WTC11 (cell line): ENCODE measurements at regions of chr1 and their contacts with region 1.

Region 1: DNA sequence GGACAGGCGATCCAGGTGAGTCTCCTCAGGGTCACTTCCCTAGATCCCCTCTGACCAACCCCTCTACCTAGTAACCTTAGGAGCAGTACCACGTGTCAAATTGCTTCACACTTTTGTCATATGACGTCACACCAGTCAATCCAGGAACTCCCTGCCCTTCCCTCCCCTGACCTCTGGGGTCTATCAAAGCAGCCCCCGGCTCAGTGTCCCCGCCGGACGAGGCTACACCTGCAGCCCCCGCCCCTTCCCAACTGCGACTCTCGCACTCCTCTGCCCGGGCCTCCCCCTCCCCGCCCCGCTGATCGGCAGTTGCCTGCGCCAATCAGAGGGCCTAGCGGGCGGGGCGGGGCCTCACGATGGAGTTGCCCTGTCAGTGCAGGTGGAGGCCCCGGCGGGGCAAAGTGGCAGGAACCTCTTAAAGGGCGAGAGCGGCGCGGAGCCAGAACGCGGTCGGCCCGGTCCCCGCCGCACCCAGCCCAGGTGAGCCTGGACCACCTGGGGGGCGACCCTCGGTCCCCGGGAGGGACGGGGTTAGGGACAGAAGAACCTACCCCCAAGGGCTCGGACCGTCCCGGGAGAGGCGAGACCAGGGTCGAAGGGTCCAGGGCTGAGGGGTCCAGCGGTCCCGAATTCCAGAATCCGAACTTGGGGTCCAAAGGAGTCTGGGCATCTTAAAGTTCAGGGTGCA is 27.5 kb upstream of the EPB41 start:
- DNase-seq: peak; percentile 93
- ATAC-seq: peak; percentile 64
- H3K4me3 Mint-ChIP-seq: peak overlapping the region; percentile 68
- H3K27ac Mint-ChIP-seq: 0 out of 2 replicates have a peak overlapping the region, but pooled peaks have one; percentile 14
- H3K4me1 Mint-ChIP-seq: peaks cover 46% of the 10 kb centered on the region
- H3K27me3 Mint-ChIP-seq: peaks cover 10% of the 10 kb centered on the region
- CTCF ChIP-seq: no peak

Region 2: GRCh38 chr1:28775121-28775944 is 111.5 kb before region 1 on chr1:
- CTCF ChIA-PET with region 1: interaction called, 18 read pairs
- POLR2A ChIA-PET with region 1: interaction called, 4 read pairs
- DNase-seq: peak; percentile 77
- ATAC-seq: peak; percentile 91
- H3K4me3 Mint-ChIP-seq: peak overlapping the region; percentile 69
- H3K27ac Mint-ChIP-seq: peak overlapping the region; percentile 88
- H3K4me1 Mint-ChIP-seq: 0 out of 2 replicates have a peak, but pooled peaks cover 3% of the 10 kb centered on the region
- H3K27me3 Mint-ChIP-seq: no peaks in the 10 kb centered on the region
- CTCF ChIP-seq: no peak

Region 3: GRCh38 chr1:28792644-28793121 is 94.2 kb before region 1 on chr1:
- CTCF ChIA-PET with region 1: interaction called, 13 read pairs
- POLR2A ChIA-PET with region 1: no interaction called
- DNase-seq: no peak
- ATAC-seq: no peak
- H3K4me3 Mint-ChIP-seq: no peak overlapping the region
- H3K27ac Mint-ChIP-seq: no peak overlapping the region
- H3K4me1 Mint-ChIP-seq: peaks cover 19% of the 10 kb centered on the region
- H3K27me3 Mint-ChIP-seq: no peaks in the 10 kb centered on the region; the same call in 1 of the 2 replicates
- CTCF ChIP-seq: no peak

Region 4: DNA sequence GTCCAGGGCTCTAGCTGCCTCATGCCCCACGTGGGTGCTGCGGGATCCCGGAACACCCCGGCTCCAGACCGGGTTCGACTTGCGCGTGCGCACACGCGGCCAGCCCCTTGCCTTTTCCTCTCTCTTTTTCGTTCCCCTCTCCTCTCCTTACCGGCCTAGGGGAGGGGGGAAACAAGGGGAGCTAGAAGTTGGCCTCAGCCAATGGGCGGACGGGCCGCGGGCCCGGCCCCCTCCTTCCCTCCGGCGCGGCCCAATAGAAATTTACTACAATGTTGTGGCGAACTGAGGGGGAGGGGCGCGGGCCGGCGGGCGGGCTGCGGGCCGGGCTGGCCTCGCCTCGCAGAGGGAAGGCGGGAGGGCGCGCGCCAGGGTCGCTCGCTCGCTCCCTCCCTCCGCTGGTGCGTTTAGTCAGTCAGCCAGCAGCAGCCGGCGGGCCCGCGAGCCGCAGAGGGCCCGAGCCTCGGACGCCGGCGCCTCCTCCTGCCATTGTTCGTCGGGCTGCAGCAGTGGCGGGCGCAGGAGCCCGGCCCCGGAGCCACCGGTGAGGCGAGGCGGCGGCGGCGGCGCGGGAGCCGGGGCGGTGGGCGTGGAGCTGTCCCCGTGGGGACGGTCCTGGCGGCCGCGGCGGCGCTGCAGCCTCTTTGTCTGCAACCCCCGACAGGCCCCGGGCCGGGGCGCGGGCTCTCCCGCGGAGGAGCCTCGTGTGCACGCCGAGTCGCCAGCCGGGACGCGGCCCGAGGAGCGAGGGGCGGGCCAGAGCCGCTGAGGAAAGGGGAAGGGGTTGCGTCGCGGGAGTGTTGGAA is 27.6 kb after region 1 on chr1 and contains the start of gene EPB41:
- CTCF ChIA-PET with region 1: interaction called, 23 read pairs
- POLR2A ChIA-PET with region 1: interaction called, 7 read pairs
- DNase-seq: peak; percentile 97
- ATAC-seq: peak; percentile 96
- H3K4me3 Mint-ChIP-seq: peak within 1 kb of the TSS; percentile 97
- H3K27ac Mint-ChIP-seq: peak within 1 kb of the TSS; percentile 97
- H3K4me1 Mint-ChIP-seq: peaks cover 26% of the 10 kb centered on the region
- H3K27me3 Mint-ChIP-seq: no peaks in the 10 kb centered on the region
- CTCF ChIP-seq: no peak
- total RNA-seq, gene EPB41: 80.6 to 85.0 TPM (median 81.2 TPM) in 3 replicates

Region 5: DNA sequence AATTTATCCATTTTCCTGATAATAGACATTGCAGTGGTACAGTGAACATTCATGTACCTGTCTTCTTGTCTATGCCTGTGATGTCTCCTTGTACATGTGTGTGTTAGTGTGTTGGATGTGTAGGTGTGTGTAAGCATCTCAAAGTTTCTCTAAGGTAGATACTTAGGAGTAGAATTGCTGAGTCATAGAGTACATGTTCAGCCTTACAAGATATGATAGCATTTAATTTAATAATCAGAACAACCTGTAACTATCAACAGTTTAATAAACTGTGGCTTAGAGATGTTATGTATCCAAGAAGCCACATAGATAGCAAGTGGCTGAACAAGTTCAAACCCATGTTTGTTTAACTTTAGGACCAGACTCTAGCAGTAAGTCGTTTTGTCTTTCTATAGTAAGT is 63.1 kb after region 1 on chr1:
- CTCF ChIA-PET with region 1: no interaction called
- POLR2A ChIA-PET with region 1: no interaction called
- DNase-seq: no peak
- ATAC-seq: no peak
- H3K4me3 Mint-ChIP-seq: no peak overlapping the region
- H3K27ac Mint-ChIP-seq: peak overlapping the region; percentile 38
- H3K4me1 Mint-ChIP-seq: peaks cover 15% of the 10 kb centered on the region
- H3K27me3 Mint-ChIP-seq: no peaks in the 10 kb centered on the region
- CTCF ChIP-seq: no peak

Region 6: GRCh38 chr1:29033829-29034466 is 147.1 kb after region 1 on chr1:
- CTCF ChIA-PET with region 1: interaction called, 102 read pairs
- POLR2A ChIA-PET with region 1: no interaction called
- DNase-seq: no peak
- ATAC-seq: no peak
- H3K4me3 Mint-ChIP-seq: no peak overlapping the region
- H3K27ac Mint-ChIP-seq: no peak overlapping the region
- H3K4me1 Mint-ChIP-seq: peaks cover 9% of the 10 kb centered on the region
- H3K27me3 Mint-ChIP-seq: no peaks in the 10 kb centered on the region
- CTCF ChIP-seq: no peak

Region 7: GRCh38 chr1:29124366-29125236 is 237.7 kb after region 1 on chr1:
- CTCF ChIA-PET with region 1: interaction called, 35 read pairs
- POLR2A ChIA-PET with region 1: interaction called, 6 read pairs
- DNase-seq: peak; percentile 93
- ATAC-seq: peak; percentile 40
- H3K4me3 Mint-ChIP-seq: peak overlapping the region; percentile 65
- H3K27ac Mint-ChIP-seq: no peak overlapping the region; the same call in 1 of the 2 replicates
- H3K4me1 Mint-ChIP-seq: peaks cover 19% of the 10 kb centered on the region
- H3K27me3 Mint-ChIP-seq: peaks cover 23% of the 10 kb centered on the region
- CTCF ChIP-seq: 0 out of 2 replicates have a peak, but pooled peaks have one; percentile 36

Region 8: DNA sequence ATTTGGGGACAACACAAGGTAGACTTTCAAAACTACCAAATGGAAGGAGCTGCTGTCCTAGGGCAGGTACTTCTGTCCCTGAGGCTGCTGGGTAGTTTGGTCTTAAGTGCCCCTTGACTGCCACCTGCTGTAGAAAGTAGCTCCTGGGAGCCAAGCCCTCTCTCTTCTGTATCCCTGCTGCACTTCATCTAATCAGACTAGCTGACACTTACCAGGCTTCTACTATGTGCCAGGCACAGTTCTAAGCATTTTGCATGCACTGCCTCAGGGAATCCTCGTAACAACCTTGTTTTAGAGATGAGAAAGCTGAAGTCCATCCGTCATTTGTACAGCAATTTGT is 310.7 kb after region 1 on chr1:
- CTCF ChIA-PET with region 1: interaction called, 57 read pairs
- POLR2A ChIA-PET with region 1: interaction called, 4 read pairs
- DNase-seq: peak; percentile 27
- ATAC-seq: peak; percentile 96
- H3K4me3 Mint-ChIP-seq: no peak overlapping the region
- H3K27ac Mint-ChIP-seq: no peak overlapping the region
- H3K4me1 Mint-ChIP-seq: peaks cover 6% of the 10 kb centered on the region
- H3K27me3 Mint-ChIP-seq: no peaks in the 10 kb centered on the region
- CTCF ChIP-seq: no peak